K562 (cell line): ENCODE measurements at regions of chr3 and their contacts with region 1.

Region 1: GRCh38 chr3:50088725-50089608 is at the start of gene RBM5:
- DNase-seq: peak; percentile 84 to 94 (median 89)
- ATAC-seq: peak; percentile 100
- H3K4me3 ChIP-seq: peak within 1 kb of the TSS; percentile 76
- H3K27ac ChIP-seq: peak within 1 kb of the TSS; percentile 97
- H3K4me1 ChIP-seq: peaks cover 0 to 8% of the 10 kb centered on the region in 2 experiments; a peak in 2 of 5 replicates
- H3K27me3 ChIP-seq: no peaks in the 10 kb centered on the region
- CTCF ChIP-seq: no peak
- EP300 ChIP-seq: no peak
- POLR2A ChIP-seq: peak; percentile 85
- RAD21 ChIP-seq: no peak
- polyA plus RNA-seq, gene RBM5: 24.5 to 53.3 TPM

Region 2: DNA sequence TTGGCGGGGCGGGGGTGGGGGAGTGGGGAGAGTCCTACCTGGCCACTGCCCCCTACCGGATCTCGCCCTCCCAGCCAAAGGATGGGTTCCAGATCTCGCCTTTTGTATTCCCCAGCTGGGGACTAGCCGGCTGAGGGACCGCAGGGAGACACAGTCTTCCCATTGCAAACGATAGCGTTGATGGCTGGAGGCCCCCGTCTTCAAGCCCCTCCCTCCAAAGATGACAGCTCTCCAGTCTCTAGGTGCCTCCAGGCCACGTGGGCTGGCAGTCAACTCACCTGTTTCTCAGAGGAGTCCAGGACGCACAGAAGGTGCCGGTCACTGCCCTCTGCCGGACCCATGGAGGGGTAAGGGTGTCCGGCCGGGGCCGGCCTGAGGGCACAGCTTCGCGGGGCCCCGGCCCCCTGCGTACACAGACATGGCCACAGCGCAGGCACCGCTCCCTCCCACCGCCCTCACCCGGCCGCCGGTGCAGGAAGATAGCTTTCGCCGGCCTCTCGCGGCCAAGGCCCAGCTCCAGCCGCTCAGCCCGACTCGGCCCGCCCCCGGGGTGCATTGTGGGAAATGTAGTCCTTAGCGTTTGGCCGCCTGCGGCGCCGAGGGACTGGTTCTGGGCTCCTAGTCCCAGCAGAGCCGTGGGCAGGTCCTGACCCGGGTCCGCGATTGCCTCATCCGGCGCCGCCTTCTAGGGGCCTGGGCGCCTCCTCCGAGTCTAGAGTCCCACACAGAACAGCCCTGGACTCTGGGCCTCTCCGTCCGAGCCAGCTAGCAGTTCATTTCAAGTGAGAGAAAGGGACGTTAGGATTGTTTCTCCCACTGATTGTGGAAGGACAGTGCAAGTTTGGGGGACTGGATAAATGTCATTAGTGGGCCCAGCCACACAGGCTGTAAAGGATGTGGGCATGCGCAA is 159.4 kb before region 1 on chr3 and contains the start of gene MON1A:
- CTCF ChIA-PET with region 1: no interaction called
- POLR2A ChIA-PET with region 1: no interaction called
- in situ Hi-C with region 1: no loop called
- intact Hi-C with region 1: loop called (anchors 5 kb)
- DNase-seq: peak; percentile 82 to 95 (median 84)
- ATAC-seq: peak; percentile 94
- H3K4me3 ChIP-seq: peak within 1 kb of the TSS; percentile 62
- H3K27ac ChIP-seq: peak within 1 kb of the TSS; percentile 95
- H3K4me1 ChIP-seq: peaks cover 22 to 31% of the 10 kb centered on the region in 2 experiments
- H3K27me3 ChIP-seq: no peaks in the 10 kb centered on the region
- CTCF ChIP-seq: peak; percentile 20 to 34 (median 29); a peak in 4 of 6 replicates
- EP300 ChIP-seq: 0 out of 2 replicates have a peak, but pooled peaks have one; percentile 10
- POLR2A ChIP-seq: peak; percentile 74
- RAD21 ChIP-seq: no peak
- polyA plus RNA-seq, gene MON1A: 1.1 to 1.5 TPM

Region 3: GRCh38 chr3:50078622-50079021 is 10.3 kb before region 1 on chr3:
- CTCF ChIA-PET with region 1: no interaction called
- POLR2A ChIA-PET with region 1: interaction called, 12 read pairs
- in situ Hi-C with region 1: no loop called
- intact Hi-C with region 1: no loop called
- DNase-seq: no peak
- ATAC-seq: peak; percentile 64
- H3K4me3 ChIP-seq: no peak overlapping the region
- H3K27ac ChIP-seq: no peak overlapping the region
- H3K4me1 ChIP-seq: no peaks in the 10 kb centered on the region
- H3K27me3 ChIP-seq: no peaks in the 10 kb centered on the region
- CTCF ChIP-seq: no peak
- EP300 ChIP-seq: no peak
- POLR2A ChIP-seq: no peak
- RAD21 ChIP-seq: no peak

Region 4: DNA sequence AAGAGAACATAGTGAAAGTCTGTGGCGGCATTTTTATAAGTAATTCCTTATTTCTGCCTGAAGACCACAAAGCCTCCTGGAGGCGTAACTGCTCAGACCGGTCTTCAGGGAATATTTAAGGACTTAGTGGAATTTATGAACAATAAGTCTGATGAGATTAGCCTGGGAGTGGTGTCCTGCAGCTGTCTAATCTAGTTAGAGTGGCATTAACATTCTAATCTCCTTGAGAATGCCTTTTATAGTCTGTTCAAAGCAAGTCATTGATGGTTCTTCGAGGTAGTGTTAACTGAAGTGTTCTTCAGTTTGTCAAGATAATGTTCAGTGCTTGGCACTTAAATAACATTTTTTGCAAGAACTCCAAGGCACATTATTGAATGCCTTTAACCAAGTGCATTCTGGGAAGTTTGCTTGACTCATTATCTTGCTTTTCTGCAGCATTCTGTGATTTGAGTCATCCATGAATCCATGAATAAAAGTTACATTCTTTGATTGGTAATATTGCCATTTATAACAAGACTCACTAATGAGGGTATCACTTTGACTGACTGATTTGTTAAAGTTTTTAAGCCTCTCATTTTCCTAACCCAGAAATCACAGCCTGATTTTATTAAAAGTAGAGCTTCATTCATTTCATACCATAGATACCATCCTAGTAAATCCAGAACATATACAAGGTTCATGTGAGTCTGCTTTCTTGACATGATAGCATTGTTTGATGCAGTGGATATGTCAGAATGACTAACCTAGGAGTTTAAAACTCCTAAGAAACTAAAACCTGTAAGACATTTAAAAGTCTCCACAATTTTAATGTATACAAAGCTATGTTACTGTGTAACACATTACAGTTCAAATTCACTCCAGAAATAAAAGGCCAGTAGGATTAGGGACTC is 12.2 kb after region 1 on chr3:
- CTCF ChIA-PET with region 1: interaction called, 3 read pairs
- POLR2A ChIA-PET with region 1: interaction called, 11 read pairs
- in situ Hi-C with region 1: no loop called
- intact Hi-C with region 1: no loop called
- DNase-seq: no peak
- ATAC-seq: no peak
- H3K4me3 ChIP-seq: no peak overlapping the region
- H3K27ac ChIP-seq: no peak overlapping the region
- H3K4me1 ChIP-seq: no peaks in the 10 kb centered on the region
- H3K27me3 ChIP-seq: no peaks in the 10 kb centered on the region
- CTCF ChIP-seq: no peak
- EP300 ChIP-seq: no peak
- POLR2A ChIP-seq: no peak
- RAD21 ChIP-seq: no peak